ENCODE measurements at regions of chrX and their contacts with region 1.

Region 1: DNA sequence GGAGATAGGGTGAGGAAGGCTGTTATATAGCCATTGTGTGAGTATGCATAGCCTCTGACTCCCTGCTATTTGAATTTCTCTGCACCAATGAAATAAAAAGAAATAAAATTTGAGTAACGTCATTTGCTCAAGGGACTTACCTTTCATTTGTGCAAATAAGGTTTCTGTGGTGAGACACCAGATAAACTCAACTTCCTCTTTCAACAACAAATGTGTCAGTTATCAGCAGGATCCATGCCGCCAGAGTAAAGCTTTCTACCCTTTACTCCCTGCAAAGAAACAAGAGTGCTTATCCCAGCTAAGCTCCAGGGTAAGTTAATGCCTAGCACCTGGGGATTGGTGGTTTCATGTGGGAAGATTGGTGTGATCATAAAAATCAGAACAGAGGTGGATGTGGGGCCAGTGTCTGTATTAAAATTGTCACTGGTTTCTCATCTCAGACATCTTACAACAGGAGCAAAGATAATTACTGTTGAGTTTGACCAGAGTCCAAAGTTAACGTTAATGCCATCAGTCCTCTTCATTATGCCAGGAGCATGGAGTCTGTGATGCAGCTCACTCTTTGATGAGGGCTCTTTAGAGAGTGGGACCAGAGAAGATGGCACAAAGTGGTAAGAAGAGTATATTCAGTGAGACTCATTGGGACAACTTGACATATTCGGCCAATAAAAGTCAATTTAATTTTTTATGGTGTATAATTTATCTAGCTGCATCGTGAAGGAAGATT is at the start of gene P2RY10:
- DNase-seq: peak; percentile 45
- H3K4me3 Mint-ChIP-seq: peak within 1 kb of the TSS; percentile 94
- H3K27ac Mint-ChIP-seq: peak within 1 kb of the TSS; percentile 98
- H3K4me1 Mint-ChIP-seq: peaks cover 54% of the 10 kb centered on the region
- H3K27me3 Mint-ChIP-seq: no peaks in the 10 kb centered on the region
- total RNA-seq, gene P2RY10: 61.9 to 63.3 TPM

Region 2: DNA sequence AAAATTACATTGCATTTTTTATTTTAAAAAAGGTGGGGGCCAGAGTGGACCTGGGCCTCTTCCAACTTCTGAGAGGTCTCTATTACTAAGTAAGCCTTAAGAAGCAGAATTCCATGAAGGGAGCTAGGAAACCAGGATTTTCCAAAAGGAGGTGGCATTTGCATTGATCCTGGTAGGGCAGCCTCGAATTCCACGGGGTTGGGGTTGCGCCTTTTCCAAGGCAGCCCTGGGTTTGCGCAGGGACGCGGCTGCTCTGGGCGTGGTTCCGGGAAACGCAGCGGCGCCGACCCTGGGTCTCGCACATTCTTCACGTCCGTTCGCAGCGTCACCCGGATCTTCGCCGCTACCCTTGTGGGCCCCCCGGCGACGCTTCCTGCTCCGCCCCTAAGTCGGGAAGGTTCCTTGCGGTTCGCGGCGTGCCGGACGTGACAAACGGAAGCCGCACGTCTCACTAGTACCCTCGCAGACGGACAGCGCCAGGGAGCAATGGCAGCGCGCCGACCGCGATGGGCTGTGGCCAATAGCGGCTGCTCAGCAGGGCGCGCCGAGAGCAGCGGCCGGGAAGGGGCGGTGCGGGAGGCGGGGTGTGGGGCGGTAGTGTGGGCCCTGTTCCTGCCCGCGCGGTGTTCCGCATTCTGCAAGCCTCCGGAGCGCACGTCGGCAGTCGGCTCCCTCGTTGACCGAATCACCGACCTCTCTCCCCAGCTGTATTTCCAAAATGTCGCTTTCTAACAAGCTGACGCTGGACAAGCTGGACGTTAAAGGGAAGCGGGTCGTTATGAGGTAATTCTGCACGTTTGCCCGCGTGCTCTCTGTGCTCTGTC is 841.5 kb before region 1 on chrX and contains the start of gene PGK1:
- CTCF ChIA-PET with region 1: no interaction called
- intact Hi-C with region 1: loop called (anchors 5 kb)
- DNase-seq: peak; percentile 95
- H3K4me3 Mint-ChIP-seq: peak within 1 kb of the TSS; percentile 95
- H3K27ac Mint-ChIP-seq: peak within 1 kb of the TSS; percentile 92
- H3K4me1 Mint-ChIP-seq: peaks cover 28% of the 10 kb centered on the region
- H3K27me3 Mint-ChIP-seq: no peaks in the 10 kb centered on the region
- total RNA-seq, gene PGK1: 744 to 766 TPM

Region 3: GRCh38 chrX:78327370-78328086 is 617.8 kb before region 1 on chrX and contains the start of gene CYSLTR1:
- CTCF ChIA-PET with region 1: interaction called, 3 read pairs
- intact Hi-C with region 1: loop called (anchors 2 kb)
- DNase-seq: no peak
- H3K4me3 Mint-ChIP-seq: peak within 1 kb of the TSS; percentile 71
- H3K27ac Mint-ChIP-seq: peak within 1 kb of the TSS; percentile 85
- H3K4me1 Mint-ChIP-seq: peaks cover 58% of the 10 kb centered on the region
- H3K27me3 Mint-ChIP-seq: no peaks in the 10 kb centered on the region
- total RNA-seq, gene CYSLTR1: 2.1 to 2.2 TPM

Region 4: DNA sequence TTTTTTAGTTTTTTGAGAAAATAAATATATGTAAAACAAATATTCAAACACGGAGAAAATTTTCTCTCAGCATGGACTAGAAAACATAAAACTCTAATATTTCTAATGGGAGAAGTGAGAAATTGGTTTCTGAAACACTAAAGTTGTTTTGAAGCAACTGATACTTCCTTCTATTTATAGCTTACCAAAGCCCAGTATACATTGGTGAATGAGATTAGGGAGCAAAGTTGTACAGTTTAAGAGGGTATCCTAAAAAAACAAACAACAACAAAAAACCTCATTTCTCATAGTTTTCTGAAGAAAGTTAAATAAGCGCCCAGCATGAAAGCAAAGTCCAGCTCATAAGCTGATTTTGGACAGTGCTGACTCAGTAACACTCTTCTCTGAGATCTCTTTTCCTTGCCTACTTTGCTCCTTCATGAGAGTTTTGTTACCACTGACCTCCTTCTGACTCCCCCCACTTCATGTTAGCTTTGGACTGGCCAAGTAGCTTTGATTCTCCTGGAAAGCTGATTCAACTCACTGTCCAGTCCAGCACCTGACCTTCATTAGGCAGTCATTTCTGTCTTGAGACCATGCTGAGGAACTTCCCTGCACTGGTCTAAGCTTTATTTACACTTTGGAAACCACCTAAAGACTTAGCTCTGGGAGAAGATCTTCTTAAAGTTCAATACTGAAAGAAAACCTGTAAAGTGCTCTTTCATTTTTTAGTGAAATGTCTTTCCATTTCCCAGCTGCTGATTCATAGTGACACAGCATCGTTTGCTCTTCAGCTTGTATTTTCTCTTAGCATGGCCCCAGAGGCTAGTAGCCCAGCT is 21.9 kb before region 1 on chrX:
- CTCF ChIA-PET with region 1: no interaction called
- intact Hi-C with region 1: loop called (anchors 1 kb)
- DNase-seq: peak; percentile 42
- H3K4me3 Mint-ChIP-seq: no peak overlapping the region
- H3K27ac Mint-ChIP-seq: peak overlapping the region; percentile 83
- H3K4me1 Mint-ChIP-seq: peaks cover 14% of the 10 kb centered on the region
- H3K27me3 Mint-ChIP-seq: no peaks in the 10 kb centered on the region

Region 5: DNA sequence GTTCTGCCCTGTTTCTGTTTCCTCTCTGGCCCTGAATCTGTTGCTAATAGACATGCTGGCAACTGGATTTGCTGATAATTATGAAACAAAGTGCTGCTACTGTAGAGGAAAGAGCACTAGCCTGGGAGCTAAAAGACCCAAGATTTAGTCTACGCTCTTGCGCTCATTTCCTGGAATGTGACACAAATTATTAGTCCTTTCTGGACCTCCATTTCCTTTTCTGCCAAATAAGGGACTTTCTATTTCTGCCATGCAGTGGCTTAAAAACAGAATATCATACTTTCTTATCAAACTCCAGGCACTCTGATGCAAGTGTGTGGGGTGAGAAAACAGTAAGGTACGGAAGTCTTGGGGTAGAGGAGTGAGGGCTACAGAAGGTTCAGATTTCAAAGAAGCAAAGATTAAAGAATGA is 150.8 kb after region 1 on chrX:
- CTCF ChIA-PET with region 1: no interaction called
- intact Hi-C with region 1: loop called (anchors 5 kb)
- DNase-seq: no peak
- H3K4me3 Mint-ChIP-seq: peak overlapping the region; percentile 68
- H3K27ac Mint-ChIP-seq: peak overlapping the region; percentile 94
- H3K4me1 Mint-ChIP-seq: peaks cover 71% of the 10 kb centered on the region
- H3K27me3 Mint-ChIP-seq: no peaks in the 10 kb centered on the region

Region 6: GRCh38 chrX:79161655-79162054 is 216.3 kb after region 1 on chrX:
- CTCF ChIA-PET with region 1: no interaction called
- intact Hi-C with region 1: loop called (anchors 2 kb)
- DNase-seq: peak; percentile 51
- H3K4me3 Mint-ChIP-seq: peak overlapping the region; percentile 81
- H3K27ac Mint-ChIP-seq: peak overlapping the region; percentile 98
- H3K4me1 Mint-ChIP-seq: peaks cover 55% of the 10 kb centered on the region
- H3K27me3 Mint-ChIP-seq: no peaks in the 10 kb centered on the region

Region 7: DNA sequence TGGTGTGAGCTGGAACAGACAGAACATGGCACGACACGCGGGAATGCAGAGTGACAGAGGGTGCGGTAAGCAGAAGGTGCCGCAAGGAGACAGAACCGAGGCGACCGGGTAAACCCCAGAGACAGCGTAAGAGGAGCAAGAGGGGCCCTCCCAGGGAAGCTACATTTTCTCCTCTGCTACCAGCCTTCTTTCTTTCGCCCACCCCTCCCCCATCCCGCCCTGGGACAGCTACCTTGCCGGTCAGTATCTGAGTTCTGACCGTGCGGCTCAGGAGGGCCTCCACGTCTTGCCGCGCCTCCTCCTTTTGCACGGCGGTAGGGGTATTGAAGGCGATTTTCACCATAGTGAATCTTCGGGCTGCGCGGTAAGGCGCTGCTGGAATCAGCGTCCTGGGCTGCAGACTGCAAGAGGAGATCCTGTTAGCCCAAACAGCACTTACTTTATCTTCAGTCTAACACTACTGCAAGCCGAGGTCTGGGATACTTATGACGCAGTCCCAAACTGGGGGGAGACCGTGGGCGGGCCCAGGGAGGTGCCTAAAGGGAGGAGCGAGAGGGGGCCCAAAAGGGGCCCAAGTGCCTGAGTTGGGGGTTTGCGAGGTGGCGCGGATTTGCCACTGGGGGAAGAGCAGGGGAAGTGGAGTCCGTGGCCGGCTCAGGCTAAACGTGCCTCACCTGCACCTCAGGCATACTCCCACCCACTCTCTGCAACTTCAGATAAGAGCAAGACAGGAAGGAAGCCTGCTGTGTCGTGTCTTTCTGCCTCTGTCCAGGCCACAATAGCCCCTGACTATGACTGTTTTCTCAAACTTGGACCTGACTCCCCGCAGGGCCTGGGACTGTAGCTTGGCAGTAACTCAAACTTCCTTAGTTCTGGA is 421.8 kb after region 1 on chrX and contains the start of gene ITM2A:
- CTCF ChIA-PET with region 1: no interaction called
- intact Hi-C with region 1: loop called (anchors 2 kb)
- DNase-seq: peak; percentile 76
- H3K4me3 Mint-ChIP-seq: peak within 1 kb of the TSS; percentile 86
- H3K27ac Mint-ChIP-seq: peak within 1 kb of the TSS; percentile 93
- H3K4me1 Mint-ChIP-seq: peaks cover 39% of the 10 kb centered on the region
- H3K27me3 Mint-ChIP-seq: no peaks in the 10 kb centered on the region
- total RNA-seq, gene ITM2A: 99.5 to 116 TPM